Motor neuron (in vitro differentiated cells): ENCODE measurements at regions of chr10 and their contacts with region 1.

Region 1: DNA sequence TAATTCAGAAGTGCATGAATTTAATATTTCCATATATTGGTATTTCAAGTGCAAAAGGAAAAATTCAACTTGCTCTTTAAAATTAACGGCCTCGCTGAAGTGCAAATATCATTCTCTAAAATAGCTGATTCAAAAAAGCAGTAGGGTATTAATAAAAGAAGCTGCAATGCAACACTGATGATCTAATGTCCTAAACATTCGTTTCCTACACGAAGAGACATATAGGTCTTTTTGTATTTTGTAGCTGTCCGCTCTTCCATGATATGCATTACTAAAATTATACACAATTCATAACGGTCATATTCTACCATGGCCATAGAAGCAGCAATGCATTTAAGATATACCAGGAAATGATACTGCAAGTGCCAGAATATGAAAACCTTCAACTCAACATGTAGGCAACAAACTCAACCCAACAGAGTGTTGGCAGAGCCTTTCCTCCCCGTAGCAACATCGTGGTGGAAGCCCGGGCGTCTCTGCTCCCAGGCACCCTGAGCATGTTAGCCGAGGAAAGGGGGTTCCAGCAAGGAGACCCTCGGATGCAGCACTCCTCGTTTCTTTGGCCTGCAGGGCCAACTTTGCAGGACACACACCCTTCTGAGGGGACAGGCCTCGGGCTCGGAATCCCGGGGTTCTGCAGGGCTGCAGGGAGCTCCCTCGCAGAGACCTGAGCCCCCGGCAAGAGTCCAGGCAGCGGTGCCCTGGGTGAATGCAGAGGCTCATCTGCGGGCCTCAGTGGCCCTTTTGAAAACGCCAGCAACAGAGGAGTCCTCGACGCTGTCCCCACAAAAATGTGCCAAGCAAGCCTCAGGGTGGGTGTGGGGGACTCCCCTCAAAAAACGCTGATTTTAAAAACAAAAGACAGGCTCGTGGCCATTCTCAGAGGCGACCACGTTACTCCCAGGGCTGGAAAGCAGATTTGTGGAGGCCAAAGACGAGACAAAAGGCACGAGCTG is 1.6 kb downstream of the FAM171A1 start:
- ATAC-seq: peak in 6 of 8 experiments; percentile 5 to 39 (median 25)
- H3K4me3 ChIP-seq: peak overlapping the region; percentile 49 to 100 (median 80)
- H3K27ac ChIP-seq: peak overlapping the region; percentile 25 to 74
- H3K4me1 ChIP-seq: peaks cover 12 to 18% of the 10 kb centered on the region in 2 donors

Region 2: DNA sequence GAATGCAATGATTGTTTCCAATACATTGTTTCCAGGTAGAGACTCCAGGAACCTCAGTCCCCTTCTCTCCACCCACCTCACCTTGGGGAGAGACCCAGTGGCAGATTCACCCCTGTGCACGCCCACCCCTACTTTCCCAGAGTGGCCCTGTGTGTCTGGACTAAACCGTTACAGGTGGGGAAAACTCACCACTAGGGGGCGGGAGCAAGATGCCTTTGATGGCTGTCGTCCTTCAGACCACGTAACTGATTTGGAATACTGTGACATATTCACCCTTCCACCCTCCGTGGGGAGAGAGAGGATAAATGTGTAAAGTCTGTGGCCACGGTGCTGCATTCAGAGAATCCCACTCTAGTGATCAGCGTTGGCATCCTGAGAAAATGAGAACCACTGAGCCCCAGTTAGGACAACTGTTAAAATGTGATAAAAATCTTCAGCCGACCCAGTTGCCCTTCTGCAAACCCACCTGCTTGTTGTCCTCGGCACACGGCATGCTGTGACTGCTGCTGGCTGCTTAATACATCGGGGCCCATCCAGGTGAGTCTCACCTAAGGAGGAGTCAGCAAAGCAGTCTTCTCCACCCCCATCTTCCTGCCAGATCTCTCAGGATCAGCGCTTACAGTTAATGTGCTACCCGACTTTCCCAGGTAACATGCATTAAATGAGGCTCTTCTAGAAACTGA is 159.6 kb before region 1 on chr10:
- in situ Hi-C with region 1: loop called in 1 of 9 experiments (anchors 10 kb)
- ATAC-seq: peak; percentile 75 to 99 (median 94)
- H3K4me3 ChIP-seq: no peak overlapping the region
- H3K27ac ChIP-seq: no peak overlapping the region
- H3K4me1 ChIP-seq: peaks cover 7 to 11% of the 10 kb centered on the region in 2 donors

Region 3: DNA sequence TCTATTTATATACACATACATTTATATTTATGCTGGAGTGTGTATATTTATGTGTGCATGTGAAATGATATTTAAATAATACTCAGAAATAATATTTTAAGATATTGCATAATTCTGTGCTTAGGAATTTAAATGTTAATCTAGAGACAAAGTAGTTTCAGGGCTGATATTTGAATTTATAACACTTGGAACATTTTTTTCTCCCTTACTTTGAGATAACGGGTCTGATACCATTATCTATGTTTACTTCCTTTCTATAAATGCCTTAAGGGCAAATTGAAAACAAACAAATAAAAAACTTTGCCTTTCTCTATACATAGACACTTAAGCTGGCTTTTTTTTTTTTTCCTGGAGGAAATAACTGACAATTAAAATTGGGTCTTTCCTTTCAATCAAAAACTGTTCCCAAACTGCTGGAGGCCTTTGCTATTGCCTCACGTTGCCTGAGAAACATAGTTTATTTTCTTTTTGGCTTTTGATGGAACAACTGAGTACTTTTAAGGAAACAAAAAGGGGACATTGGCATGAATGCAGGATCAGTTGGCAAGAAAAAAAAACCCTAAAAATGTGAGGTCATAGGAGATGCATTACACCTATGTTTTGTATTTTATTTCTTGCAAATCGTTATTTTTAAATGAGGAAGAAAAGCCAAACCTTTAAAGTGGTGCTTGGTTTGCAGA is 251.4 kb after region 1 on chr10:
- in situ Hi-C with region 1: no loop called
- ATAC-seq: no peak
- H3K4me3 ChIP-seq: no peak overlapping the region
- H3K27ac ChIP-seq: no peak overlapping the region
- H3K4me1 ChIP-seq: no peaks in the 10 kb centered on the region